ENCODE measurements at regions of chr10 and their contacts with region 1.

Region 1: DNA sequence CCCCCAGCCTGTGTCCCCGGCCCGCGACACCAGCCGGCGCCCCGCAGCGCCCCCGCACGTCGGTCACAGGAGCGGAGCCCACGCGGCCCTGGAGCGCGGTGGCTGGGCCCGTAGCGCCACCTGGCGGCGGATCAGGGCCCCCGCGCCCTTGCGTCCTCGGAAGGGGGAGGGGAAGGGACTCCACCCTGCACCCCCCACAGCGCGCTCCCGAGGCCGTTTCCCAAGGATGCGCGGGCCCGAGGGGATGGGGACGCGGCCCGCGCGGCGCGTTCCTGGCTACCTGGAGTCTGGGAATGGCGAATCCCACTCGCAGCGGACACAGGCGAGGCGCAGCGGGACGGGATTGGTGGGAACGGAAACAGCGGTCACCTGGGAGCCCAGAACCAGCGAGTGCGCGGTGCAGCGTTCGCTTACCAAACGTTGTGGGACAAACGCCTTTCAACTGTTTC is 23.8 kb upstream of the MKI67 start:
- DNase-seq: peak; percentile 75 to 87 (median 79)
- ATAC-seq: peak; percentile 100
- H3K4me3 ChIP-seq: no peak overlapping the region
- H3K4me1 ChIP-seq: no peaks in the 10 kb centered on the region
- CTCF ChIP-seq: peak; percentile 97

Region 2: DNA sequence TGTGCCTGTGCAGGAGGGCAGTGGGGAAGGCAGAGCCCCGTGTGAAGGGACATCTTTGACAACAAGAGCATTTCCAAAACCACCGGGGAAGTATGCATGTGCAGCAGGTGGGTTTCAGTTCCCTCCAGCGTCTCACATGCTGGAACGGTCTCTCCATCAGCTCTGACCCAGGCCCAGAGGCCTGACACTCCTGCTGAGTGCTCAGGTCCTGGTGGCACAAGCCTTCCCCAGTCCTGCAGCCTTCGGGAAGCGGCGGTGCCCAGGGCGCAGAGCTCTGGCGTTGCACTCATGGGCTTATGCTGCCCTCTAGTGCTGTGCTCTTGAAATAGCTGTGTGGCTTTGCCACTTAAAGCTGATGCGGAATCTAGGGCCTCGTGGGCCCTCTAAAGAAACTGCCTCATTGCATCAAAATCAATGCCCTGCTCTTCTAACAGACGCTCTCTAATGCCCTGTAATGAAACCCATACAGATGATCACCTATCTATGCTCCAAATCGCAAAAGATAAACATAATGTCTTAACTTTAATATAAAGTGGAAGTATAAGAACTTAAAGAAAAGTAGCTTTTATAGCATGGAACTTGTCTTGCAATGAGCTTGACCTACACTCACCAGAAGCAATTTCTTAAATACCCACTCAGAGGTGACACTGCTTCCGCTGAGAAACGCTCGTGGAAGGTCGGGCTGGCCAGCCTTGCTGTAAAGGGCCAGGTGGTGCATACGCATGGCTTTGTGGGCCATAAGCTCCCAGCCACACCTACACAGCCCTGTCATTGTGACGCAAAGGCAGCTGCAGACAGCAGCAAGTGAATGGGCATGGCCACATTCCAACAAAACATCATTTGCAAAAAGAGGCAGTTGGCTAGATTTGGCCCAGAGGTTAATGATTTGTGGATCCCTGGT is 296.0 kb before region 1 on chr10:
- intact Hi-C with region 1: no loop called
- DNase-seq: peak in 2 of 3 donors; percentile 73 to 74
- ATAC-seq: peak; percentile 92
- H3K4me3 ChIP-seq: no peak overlapping the region
- H3K4me1 ChIP-seq: no peaks in the 10 kb centered on the region
- CTCF ChIP-seq: peak; percentile 70

Region 3: DNA sequence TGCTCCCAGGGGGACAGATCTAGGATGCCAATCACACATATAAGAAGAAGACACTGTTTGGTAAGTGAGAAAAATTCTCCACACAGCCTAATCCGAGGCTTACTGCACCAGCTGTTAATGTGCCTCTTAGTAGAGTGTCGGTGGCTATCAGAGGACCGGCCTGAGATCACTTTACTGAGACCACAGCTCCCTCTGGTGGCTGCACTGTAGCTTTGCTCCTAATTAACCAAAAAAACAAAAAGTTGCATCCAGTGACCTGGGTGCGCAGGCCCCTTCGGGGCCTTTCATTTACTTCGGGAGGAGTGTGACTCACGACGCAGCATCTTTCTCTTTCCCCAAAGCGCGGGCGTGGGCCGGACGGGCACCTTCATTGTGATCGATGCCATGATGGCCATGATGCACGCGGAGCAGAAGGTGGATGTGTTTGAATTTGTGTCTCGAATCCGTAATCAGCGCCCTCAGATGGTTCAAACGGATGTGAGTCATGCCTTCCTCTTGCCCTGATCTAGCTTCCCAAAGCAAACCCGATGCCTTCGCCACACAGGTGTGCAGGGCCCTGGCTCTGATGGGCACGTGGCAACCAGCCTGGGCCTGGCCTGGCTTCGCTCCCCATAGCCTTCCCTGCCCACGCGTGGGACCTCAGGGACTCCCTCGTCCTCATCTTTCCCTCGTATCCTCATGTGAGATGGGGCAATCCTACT is 80.6 kb before region 1 on chr10:
- intact Hi-C with region 1: loop called in 1 of 2 experiments (anchors 10 kb)
- DNase-seq: peak in 2 of 3 donors; percentile 57 to 78
- ATAC-seq: peak; percentile 83
- H3K4me3 ChIP-seq: no peak overlapping the region
- H3K4me1 ChIP-seq: peaks cover 4% of the 10 kb centered on the region
- CTCF ChIP-seq: peak; percentile 69

Region 4: GRCh38 chr10:128927492-128928161 is 777.6 kb after region 1 on chr10:
- intact Hi-C with region 1: no loop called
- DNase-seq: no peak
- ATAC-seq: no peak
- H3K4me3 ChIP-seq: no peak overlapping the region
- H3K4me1 ChIP-seq: no peaks in the 10 kb centered on the region
- CTCF ChIP-seq: no peak

Measured in mucosa of descending colon (tissue), 3 donors.